ENCODE measurements at regions of chr10 and their contacts with region 1.

Region 1: DNA sequence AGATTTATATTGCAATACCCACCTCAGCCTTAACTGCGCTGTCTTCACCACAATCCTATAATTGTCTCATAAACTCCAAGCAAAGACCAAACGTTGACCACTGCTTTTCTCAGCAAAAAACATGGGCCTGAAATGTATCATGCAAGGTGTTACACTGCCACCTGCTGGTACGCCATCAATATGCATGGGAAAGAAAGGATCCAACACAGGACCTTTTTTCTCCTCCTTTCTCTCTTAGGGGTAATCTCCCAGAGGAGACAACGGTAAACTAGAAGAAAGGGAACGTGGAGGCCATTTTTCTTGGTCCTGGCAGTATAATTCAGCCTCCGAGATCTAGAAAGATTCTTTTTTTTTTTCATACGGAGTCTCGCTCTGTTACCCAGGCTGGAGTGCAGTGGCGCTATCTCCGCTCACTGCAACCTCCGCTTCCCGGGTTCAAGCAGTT is 79.1 kb upstream of the MPP7 start:
- DNase-seq: peak; percentile 88
- H3K4me3 ChIP-seq: no peak overlapping the region
- H3K27ac ChIP-seq: no peak overlapping the region
- H3K4me1 ChIP-seq: peaks cover under 1% of the 10 kb centered on the region
- H3K27me3 ChIP-seq: no peaks in the 10 kb centered on the region
- CTCF ChIP-seq: peak; percentile 89

Region 2: DNA sequence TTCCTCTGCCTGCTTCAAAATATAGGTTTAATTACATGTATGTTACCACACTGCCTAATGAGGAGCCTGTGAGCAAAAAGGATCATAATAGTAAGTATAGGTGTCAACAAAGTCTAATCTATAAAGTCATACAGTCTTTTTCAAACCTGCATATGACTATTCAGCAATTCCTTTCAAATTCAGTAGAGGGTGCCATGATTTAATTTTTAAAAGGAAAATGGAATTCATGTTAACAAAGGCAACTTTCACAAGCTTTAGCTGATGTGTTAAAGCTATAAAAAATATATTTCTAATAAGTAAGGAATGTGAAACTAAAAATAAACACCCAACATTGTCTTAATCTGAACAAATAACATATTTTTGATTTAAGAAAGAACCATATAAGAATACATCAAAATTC is 131.1 kb before region 1 on chr10:
- intact Hi-C with region 1: loop called (anchors 2 kb)
- DNase-seq: no peak
- H3K4me3 ChIP-seq: no peak overlapping the region
- H3K27ac ChIP-seq: no peak overlapping the region
- H3K4me1 ChIP-seq: no peaks in the 10 kb centered on the region
- H3K27me3 ChIP-seq: no peaks in the 10 kb centered on the region
- CTCF ChIP-seq: peak; percentile 53

Region 3: GRCh38 chr10:28280652-28281051 is 101.3 kb before region 1 on chr10:
- intact Hi-C with region 1: no loop called
- DNase-seq: no peak
- H3K4me3 ChIP-seq: no peak overlapping the region
- H3K27ac ChIP-seq: no peak overlapping the region
- H3K4me1 ChIP-seq: no peaks in the 10 kb centered on the region
- H3K27me3 ChIP-seq: no peaks in the 10 kb centered on the region
- CTCF ChIP-seq: no peak

Region 4: GRCh38 chr10:28295336-28295735 is 86.6 kb before region 1 on chr10:
- intact Hi-C with region 1: loop called (anchors 5 kb)
- DNase-seq: no peak
- H3K4me3 ChIP-seq: no peak overlapping the region
- H3K27ac ChIP-seq: no peak overlapping the region
- H3K4me1 ChIP-seq: no peaks in the 10 kb centered on the region
- H3K27me3 ChIP-seq: no peaks in the 10 kb centered on the region
- CTCF ChIP-seq: no peak

Region 5: GRCh38 chr10:28411654-28412053 is 29.7 kb after region 1 on chr10:
- intact Hi-C with region 1: no loop called
- DNase-seq: no peak
- H3K4me3 ChIP-seq: no peak overlapping the region
- H3K27ac ChIP-seq: no peak overlapping the region
- H3K4me1 ChIP-seq: no peaks in the 10 kb centered on the region
- H3K27me3 ChIP-seq: no peaks in the 10 kb centered on the region
- CTCF ChIP-seq: no peak

Measured in colonic mucosa (tissue), 4 donors.